CD4-positive, alpha-beta T cell (primary cell): ENCODE measurements at regions of chr7 and their contacts with region 1.

Region 1: DNA sequence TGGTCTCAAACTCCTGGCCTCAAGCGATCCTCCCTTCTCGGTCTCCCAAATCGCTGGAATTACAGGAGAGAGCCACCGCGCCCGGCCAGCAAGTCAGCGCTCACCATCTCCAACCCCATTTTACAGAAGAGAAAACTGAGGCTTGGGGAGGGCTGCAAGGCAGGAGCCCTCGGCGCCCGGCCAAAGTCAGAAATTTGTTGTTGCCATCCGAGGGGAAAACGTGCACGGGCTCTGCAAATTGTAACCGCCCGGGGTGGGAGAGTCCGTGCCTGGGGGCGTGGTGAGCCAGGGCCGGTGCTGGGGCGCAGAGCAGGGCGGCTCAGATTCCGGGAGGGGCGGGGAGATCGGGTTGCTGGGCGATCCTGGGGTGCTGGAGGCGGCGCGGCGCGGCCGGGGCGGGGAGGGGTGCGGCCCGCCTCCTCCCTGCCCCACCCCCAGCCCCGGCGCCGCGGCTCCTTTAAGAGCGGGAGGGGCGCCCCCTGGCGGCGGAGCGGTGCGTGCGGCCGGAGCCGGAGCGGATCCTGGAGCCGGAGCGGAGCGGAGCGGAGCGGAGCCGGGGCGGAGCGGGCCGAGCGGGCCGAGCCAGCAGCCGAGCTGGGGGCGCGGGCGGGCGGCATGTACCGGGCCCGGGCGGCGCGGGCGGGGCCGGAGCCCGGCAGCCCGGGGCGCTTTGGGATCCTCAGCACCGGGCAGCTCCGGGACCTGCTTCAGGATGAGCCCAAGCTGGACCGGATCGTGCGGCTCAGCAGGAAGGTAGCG is at the start of gene VPS37D:
- DNase-seq: peak; percentile 85 to 97 (median 94)
- ATAC-seq: peak; percentile 91
- H3K4me3 ChIP-seq: peak within 1 kb of the TSS; percentile 51
- H3K4me3 Mint-ChIP-seq: peak within 1 kb of the TSS; percentile 82
- H3K27ac ChIP-seq: no peak within 1 kb of the TSS
- H3K27ac Mint-ChIP-seq: no peak within 1 kb of the TSS
- H3K4me1 ChIP-seq: peaks cover 14% of the 10 kb centered on the region
- H3K4me1 Mint-ChIP-seq: peaks cover 5% of the 10 kb centered on the region
- H3K27me3 ChIP-seq: peaks cover 13 to 30% of the 10 kb centered on the region in 2 experiments
- H3K27me3 Mint-ChIP-seq: peaks cover 40% of the 10 kb centered on the region
- CTCF ChIP-seq: peak; percentile 52
- total RNA-seq, gene VPS37D: 0.81 to 0.96 TPM

Region 2: DNA sequence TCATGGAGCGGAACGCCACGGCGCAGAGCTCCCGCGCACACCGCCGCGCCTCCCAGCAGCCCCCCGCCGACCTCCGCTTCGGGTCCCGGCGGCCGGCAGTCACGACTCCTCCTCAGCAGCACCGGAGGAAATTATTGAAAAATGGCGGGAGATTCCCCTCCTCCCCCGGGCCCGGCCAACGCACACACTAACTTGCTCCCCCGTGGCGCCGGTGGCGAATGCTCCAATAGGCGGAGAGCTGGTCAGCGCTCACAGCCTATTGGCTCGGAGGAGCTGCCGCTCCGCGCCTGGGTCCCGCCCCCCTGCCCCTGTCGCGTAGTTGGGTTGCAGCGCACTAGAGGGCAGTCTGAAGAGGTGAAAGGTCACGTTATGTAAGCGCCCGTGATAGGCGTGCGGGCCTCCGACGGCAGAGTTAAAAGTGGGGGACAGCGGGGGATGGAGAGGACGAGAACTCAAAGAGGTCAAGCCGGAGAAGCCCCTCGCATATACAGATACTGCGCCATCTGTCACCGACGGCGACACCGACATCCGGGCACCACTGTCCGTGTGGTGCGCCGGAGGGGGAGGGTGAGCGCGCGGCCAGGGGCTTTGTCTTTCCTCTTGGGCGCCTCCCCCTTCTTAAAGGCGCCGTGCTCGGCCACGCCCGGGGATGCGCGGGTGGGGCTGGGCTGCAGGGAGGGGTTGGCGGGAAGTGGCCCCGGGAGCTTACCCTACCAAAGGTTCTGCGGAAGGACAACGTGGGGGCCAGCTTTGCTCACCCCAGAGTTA is 145.2 kb before region 1 on chr7 and contains the start of gene BAZ1B:
- CTCF ChIA-PET with region 1: no interaction called
- POLR2A ChIA-PET with region 1: no interaction called
- intact Hi-C with region 1: loop called (anchors 5 kb)
- DNase-seq: peak; percentile 91 to 98 (median 96)
- ATAC-seq: peak; percentile 93
- H3K4me3 ChIP-seq: peak within 1 kb of the TSS; percentile 67
- H3K4me3 Mint-ChIP-seq: peak within 1 kb of the TSS; percentile 99
- H3K27ac ChIP-seq: peak within 1 kb of the TSS; percentile 87 to 92
- H3K27ac Mint-ChIP-seq: peak within 1 kb of the TSS; percentile 99
- H3K4me1 ChIP-seq: peaks cover 62% of the 10 kb centered on the region
- H3K4me1 Mint-ChIP-seq: peaks cover 74% of the 10 kb centered on the region
- H3K27me3 ChIP-seq: no peaks in the 10 kb centered on the region
- H3K27me3 Mint-ChIP-seq: no peaks in the 10 kb centered on the region
- CTCF ChIP-seq: no peak
- total RNA-seq, gene BAZ1B: 32.8 to 35.5 TPM

Region 3: DNA sequence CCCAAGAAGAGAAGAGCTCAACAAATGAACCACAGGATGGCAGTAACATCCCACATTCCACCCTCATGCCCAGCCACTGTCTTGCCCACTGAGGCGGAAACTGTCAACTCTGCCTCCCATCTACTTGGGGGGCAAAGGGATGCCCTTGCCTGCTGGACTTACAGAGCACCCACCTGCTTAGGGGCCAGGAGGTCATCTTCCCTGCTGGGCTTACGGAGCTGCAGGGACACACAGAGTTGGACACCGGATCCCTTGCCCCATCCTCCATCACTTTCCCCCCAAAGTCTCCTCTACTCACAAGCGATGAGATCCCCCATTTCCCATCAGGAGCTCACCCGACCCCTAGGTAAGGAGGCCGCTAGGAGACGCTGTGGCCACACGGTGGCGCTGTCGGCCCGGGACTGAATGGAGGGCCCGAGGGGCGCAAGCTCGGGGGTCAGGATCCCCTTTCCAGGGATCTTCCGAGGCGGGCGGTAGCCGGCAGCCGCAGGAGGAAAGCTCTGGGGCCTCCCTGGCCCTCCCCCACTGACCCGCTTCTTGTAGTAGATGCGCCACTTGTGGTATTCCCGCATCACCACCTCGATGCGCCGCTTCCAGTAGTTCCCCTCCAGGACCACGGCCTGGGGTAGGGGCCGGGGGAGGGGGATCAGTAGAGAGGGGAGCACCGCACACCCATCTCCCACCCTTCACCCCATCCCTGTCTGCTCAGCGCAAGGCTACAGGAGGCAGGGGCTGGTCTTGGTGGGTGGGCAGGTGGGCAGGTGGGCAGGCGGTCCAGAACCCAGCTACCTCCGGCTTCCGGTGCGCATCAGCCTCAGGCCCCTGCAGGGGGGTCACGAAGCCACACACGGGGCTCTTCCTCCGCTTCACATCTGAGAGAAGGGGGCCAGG is 60.5 kb before region 1 on chr7:
- CTCF ChIA-PET with region 1: interaction called, 14 read pairs
- POLR2A ChIA-PET with region 1: no interaction called
- intact Hi-C with region 1: loop called (anchors 1 to 2 kb)
- DNase-seq: peak; percentile 45 to 80 (median 60)
- ATAC-seq: peak; percentile 86
- H3K4me3 ChIP-seq: no peak overlapping the region
- H3K4me3 Mint-ChIP-seq: no peak overlapping the region
- H3K27ac ChIP-seq: no peak overlapping the region
- H3K27ac Mint-ChIP-seq: no peak overlapping the region
- H3K4me1 ChIP-seq: peaks cover 8% of the 10 kb centered on the region
- H3K4me1 Mint-ChIP-seq: no peaks in the 10 kb centered on the region
- H3K27me3 ChIP-seq: peaks cover 14% of the 10 kb centered on the region in 2 experiments
- H3K27me3 Mint-ChIP-seq: peaks cover 36% of the 10 kb centered on the region
- CTCF ChIP-seq: peak; percentile 97

Region 4: DNA sequence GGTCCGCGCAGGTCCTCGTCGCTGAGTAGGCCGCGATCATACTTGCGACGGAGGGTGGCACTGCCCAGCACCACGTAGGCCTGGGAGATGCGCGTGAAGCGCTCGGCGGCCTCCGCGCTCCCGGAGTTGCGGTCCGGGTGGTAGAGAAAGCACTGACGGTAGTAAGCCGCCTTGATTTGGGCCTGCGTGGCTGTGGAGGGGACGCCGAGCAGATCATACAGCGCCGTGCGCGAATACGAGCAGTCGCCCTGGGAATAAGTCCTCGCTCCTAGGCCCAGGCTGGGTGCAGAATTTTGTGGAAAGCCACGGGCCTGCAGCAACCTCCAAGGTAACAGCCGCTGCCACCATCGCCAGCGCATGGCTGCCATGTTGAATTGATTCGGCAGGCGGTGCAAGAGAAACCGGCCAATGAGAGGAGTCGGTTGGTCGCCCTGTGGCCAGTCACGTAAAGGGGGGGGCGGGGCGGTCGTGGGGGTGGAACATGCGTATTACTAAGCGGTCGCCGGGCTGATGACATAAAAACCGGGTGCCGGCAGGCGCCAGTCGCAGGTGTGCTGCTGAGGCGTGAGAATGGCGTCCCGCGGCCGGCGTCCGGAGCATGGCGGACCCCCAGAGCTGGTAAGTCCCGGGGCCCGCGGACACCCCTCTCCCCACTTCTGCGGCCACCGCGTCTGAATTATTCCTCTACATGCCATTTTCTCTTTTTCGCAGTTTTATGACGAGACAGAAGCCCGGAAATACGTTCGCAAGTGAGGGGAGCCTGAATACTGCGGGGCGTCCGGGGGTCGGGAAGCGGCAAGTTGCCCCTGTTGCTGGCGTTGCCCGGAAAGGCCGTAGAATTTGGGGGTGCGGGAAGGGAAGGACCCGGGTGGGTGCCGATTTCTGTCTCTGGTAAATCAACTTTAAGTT is 15.8 kb after region 1 on chr7 and contains the starts of genes BUD23 and DNAJC30:
- CTCF ChIA-PET with region 1: interaction called, 6 read pairs
- POLR2A ChIA-PET with region 1: interaction called, 4 read pairs
- intact Hi-C with region 1: loop called in 1 of 2 experiments (anchors 1 kb)
- DNase-seq: peak; percentile 93 to 98 (median 96)
- ATAC-seq: peak; percentile 96
- H3K4me3 ChIP-seq: peak within 1 kb of the TSS; percentile 71
- H3K4me3 Mint-ChIP-seq: peak within 1 kb of the TSS; percentile 91
- H3K27ac ChIP-seq: peak within 1 kb of the TSS; percentile 69 to 86
- H3K27ac Mint-ChIP-seq: peak within 1 kb of the TSS; percentile 92
- H3K4me1 ChIP-seq: peaks cover 39% of the 10 kb centered on the region
- H3K4me1 Mint-ChIP-seq: peaks cover 35% of the 10 kb centered on the region
- H3K27me3 ChIP-seq: no peaks in the 10 kb centered on the region
- H3K27me3 Mint-ChIP-seq: no peaks in the 10 kb centered on the region
- CTCF ChIP-seq: no peak
- total RNA-seq, gene BUD23: 96.1 to 103 TPM
- total RNA-seq, gene DNAJC30: 14.0 to 14.4 TPM

Region 5: DNA sequence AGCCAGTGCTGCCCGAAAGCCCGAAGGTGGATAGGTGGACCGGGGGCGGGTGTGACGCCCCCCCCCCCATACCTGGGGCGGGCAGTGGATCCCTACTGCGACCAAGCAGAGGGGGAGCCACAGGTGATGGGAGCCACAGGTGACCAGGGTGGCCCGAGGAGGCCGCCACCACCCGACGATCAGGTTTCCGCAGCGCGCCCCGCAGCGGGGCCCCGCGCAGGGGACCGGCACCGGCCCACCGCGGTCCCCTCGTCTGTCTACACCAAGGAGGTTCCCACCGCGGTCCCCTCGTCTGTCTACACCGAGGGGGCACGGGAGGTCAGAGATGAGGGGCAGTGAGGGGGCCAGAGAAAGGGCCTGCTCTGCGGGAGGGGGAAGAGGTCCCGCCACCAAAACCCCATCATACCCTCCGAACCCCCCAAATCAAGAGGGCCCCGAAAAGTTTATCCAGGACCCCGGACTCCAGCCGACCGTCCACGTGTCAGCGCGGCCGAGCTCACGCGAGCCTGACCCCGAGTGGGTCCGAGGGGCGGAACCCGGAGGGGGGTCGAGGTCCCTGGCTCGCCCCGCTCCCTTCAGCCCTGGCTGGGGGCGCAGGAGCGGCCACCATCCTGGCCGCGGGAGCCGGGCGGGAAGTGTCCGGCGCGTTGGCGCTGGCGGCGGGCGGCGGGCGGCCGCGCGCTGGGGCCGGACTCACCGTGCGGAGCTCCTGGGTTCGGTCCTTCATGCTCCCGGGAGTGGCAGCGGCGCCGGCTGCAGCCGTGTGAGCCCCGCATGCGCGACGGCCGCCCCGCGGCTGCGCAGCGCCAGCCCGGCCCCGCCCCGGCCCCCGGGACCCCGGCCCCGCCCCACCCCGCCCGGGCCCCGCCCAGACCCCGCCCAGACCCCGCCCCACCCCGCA is 51.6 kb after region 1 on chr7 and contains the start of gene STX1A:
- CTCF ChIA-PET with region 1: no interaction called
- POLR2A ChIA-PET with region 1: no interaction called
- intact Hi-C with region 1: loop called in 1 of 2 experiments (anchors 2 kb)
- DNase-seq: peak; percentile 40 to 89 (median 65)
- ATAC-seq: peak; percentile 80
- H3K4me3 ChIP-seq: peak within 1 kb of the TSS; percentile 75
- H3K4me3 Mint-ChIP-seq: peak within 1 kb of the TSS; percentile 95
- H3K27ac ChIP-seq: no peak within 1 kb of the TSS
- H3K27ac Mint-ChIP-seq: peak within 1 kb of the TSS; percentile 49
- H3K4me1 ChIP-seq: peaks cover 44% of the 10 kb centered on the region
- H3K4me1 Mint-ChIP-seq: peaks cover 16% of the 10 kb centered on the region
- H3K27me3 ChIP-seq: no peaks in the 10 kb centered on the region
- H3K27me3 Mint-ChIP-seq: peaks cover 4% of the 10 kb centered on the region
- CTCF ChIP-seq: no peak
- total RNA-seq, gene STX1A: 15.5 to 20.7 TPM

Region 6: DNA sequence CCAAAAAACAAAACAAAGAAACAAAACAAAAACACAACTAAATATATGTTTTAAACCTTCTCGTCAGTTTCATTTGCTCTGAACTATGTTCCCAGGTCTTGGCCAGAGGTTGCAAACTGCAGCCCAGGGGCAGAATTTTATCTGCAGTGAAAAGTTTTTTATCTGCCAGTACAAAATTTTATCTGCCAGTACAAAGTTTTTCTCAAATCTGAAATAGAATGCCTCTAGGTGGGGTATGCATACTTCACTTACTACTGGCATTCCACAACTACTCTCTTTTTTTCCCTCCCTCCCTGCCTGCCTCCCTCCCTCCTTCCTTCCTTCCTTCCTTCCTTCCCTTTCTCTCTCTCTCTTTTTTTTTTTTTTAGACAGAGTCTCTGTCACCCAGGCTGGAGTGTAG is 112.0 kb after region 1 on chr7:
- CTCF ChIA-PET with region 1: no interaction called
- POLR2A ChIA-PET with region 1: no interaction called
- intact Hi-C with region 1: no loop called
- DNase-seq: no peak
- ATAC-seq: no peak
- H3K4me3 ChIP-seq: no peak overlapping the region
- H3K4me3 Mint-ChIP-seq: no peak overlapping the region
- H3K27ac ChIP-seq: no peak overlapping the region
- H3K27ac Mint-ChIP-seq: no peak overlapping the region
- H3K4me1 ChIP-seq: no peaks in the 10 kb centered on the region
- H3K4me1 Mint-ChIP-seq: no peaks in the 10 kb centered on the region
- H3K27me3 ChIP-seq: no peaks in the 10 kb centered on the region
- H3K27me3 Mint-ChIP-seq: peaks cover 12% of the 10 kb centered on the region
- CTCF ChIP-seq: no peak

Region 7: GRCh38 chr7:73842247-73842895 is 174.8 kb after region 1 on chr7 and contains the start of gene METTL27:
- CTCF ChIA-PET with region 1: no interaction called
- POLR2A ChIA-PET with region 1: no interaction called
- intact Hi-C with region 1: loop called in 1 of 2 experiments (anchors 5 kb)
- DNase-seq: peak; percentile 79 to 94 (median 87)
- ATAC-seq: peak; percentile 99
- H3K4me3 ChIP-seq: peak within 1 kb of the TSS; percentile 71
- H3K4me3 Mint-ChIP-seq: peak within 1 kb of the TSS; percentile 90
- H3K27ac ChIP-seq: no peak within 1 kb of the TSS
- H3K27ac Mint-ChIP-seq: peak within 1 kb of the TSS; percentile 61
- H3K4me1 ChIP-seq: peaks cover 20% of the 10 kb centered on the region
- H3K4me1 Mint-ChIP-seq: peaks cover 14% of the 10 kb centered on the region
- H3K27me3 ChIP-seq: no peaks in the 10 kb centered on the region
- H3K27me3 Mint-ChIP-seq: no peaks in the 10 kb centered on the region
- CTCF ChIP-seq: no peak
- total RNA-seq, gene METTL27: 1.6 to 2.1 TPM

Region 8: DNA sequence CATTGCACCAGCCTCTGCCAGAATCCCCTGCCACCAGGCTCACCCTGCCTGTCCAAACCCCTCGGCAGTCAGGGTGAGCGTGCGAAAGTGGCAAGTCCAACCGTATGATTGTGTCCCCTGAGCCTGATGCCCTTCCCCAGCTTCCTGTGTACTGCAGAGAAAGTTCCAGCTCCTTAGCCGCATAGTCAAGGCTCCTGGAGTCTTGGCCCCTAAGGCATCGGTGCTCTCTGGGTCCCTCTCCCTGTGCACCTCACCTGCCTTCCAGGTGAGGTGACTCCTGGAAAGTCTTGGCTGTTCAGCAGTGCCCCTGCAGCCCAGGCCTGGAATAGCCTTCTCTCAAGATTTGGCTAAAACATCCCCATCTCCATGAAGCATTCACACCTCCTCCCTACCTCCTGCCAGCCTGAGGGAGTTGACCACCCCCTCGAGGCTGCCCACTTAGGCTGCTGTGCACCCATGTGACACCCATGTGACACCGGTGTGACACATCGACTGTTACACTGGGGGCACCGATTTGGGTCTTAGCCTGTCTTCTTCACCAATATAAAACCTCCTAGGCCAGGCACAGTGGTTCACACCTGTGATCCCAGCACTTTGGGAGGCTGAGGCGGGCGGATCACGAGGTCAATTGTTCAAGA is 304.3 kb after region 1 on chr7:
- CTCF ChIA-PET with region 1: no interaction called
- POLR2A ChIA-PET with region 1: no interaction called
- intact Hi-C with region 1: no loop called
- DNase-seq: peak in 1 of 14 experiments; percentile 22
- ATAC-seq: no peak
- H3K4me3 ChIP-seq: no peak overlapping the region
- H3K4me3 Mint-ChIP-seq: no peak overlapping the region
- H3K27ac ChIP-seq: no peak overlapping the region
- H3K27ac Mint-ChIP-seq: no peak overlapping the region
- H3K4me1 ChIP-seq: no peaks in the 10 kb centered on the region
- H3K4me1 Mint-ChIP-seq: no peaks in the 10 kb centered on the region
- H3K27me3 ChIP-seq: no peaks in the 10 kb centered on the region
- H3K27me3 Mint-ChIP-seq: peaks cover 4% of the 10 kb centered on the region
- CTCF ChIP-seq: no peak